Activated CD4-positive, alpha-beta memory T cell treated with anti-CD3 and anti-CD28 coated beads for 36 hours (primary cell): ENCODE measurements at regions of chr19 and their contacts with region 1.

Region 1: GRCh38 chr19:5953680-5954213 is 24.2 kb downstream of the RANBP3 start:
- DNase-seq: peak; percentile 64
- H3K4me3 Mint-ChIP-seq: peak overlapping the region; percentile 64
- H3K27ac Mint-ChIP-seq: peak overlapping the region; percentile 95
- H3K4me1 Mint-ChIP-seq: peaks cover 91% of the 10 kb centered on the region
- H3K27me3 Mint-ChIP-seq: no peaks in the 10 kb centered on the region

Region 2: GRCh38 chr19:5369962-5370367 is 583.8 kb before region 1 on chr19:
- CTCF ChIA-PET with region 1: no interaction called
- POLR2A ChIA-PET with region 1: no interaction called
- intact Hi-C with region 1: no loop called
- DNase-seq: peak; percentile 72
- H3K4me3 Mint-ChIP-seq: no peak overlapping the region
- H3K27ac Mint-ChIP-seq: no peak overlapping the region
- H3K4me1 Mint-ChIP-seq: no peaks in the 10 kb centered on the region
- H3K27me3 Mint-ChIP-seq: peaks cover 5% of the 10 kb centered on the region

Region 3: GRCh38 chr19:5827891-5828660 is 125.7 kb before region 1 on chr19:
- CTCF ChIA-PET with region 1: interaction called, 3 read pairs
- POLR2A ChIA-PET with region 1: no interaction called
- intact Hi-C with region 1: loop called (anchors 5 kb)
- DNase-seq: peak; percentile 97
- H3K4me3 Mint-ChIP-seq: peak overlapping the region; percentile 98
- H3K27ac Mint-ChIP-seq: peak overlapping the region; percentile 97
- H3K4me1 Mint-ChIP-seq: peaks cover 4% of the 10 kb centered on the region
- H3K27me3 Mint-ChIP-seq: no peaks in the 10 kb centered on the region